Right ventricle myocardium inferior (tissue), 1 donor: ENCODE measurements at regions of chr7 and their contacts with region 1.

Region 1: DNA sequence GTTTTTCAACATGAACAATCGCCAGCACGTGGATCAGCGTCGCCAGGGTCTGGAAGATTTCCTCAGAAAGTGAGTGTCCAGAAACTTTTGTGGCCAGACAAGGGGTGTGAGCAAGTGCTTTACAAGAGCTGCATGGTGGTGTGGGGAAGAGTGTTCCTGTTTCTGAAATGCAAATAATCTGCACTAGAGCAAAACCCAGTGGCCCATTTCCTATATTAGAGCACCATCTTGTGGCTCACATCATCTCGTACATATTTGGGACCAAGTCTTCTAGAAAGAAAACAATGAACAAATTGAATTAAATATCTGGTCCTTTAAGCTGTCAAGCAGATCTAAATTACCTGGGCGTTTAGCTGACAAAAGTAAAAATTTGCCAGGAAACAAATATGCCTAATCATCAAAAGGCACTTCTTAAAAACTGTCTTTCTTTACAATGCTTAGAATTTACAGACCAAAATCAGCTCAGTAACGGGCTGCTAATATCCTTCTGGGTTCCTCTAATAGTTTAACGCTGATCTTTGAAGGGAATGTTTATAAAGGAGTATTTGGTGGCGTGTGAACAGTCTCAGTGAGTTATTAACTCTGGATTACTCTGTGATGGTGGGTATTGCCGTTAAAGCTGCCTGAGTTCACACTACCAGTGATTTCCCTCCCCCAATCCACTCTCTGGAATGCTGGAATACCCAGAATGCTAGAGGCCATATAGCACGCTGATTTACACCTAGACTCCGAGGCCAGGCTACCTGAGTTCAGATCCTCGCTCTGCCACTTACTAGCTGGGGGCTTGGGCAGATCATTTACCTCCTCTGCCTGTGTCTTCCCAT is 73.6 kb downstream of the SNX10 start:
- DNase-seq: no peak
- ATAC-seq: peak; percentile 78

Region 2: DNA sequence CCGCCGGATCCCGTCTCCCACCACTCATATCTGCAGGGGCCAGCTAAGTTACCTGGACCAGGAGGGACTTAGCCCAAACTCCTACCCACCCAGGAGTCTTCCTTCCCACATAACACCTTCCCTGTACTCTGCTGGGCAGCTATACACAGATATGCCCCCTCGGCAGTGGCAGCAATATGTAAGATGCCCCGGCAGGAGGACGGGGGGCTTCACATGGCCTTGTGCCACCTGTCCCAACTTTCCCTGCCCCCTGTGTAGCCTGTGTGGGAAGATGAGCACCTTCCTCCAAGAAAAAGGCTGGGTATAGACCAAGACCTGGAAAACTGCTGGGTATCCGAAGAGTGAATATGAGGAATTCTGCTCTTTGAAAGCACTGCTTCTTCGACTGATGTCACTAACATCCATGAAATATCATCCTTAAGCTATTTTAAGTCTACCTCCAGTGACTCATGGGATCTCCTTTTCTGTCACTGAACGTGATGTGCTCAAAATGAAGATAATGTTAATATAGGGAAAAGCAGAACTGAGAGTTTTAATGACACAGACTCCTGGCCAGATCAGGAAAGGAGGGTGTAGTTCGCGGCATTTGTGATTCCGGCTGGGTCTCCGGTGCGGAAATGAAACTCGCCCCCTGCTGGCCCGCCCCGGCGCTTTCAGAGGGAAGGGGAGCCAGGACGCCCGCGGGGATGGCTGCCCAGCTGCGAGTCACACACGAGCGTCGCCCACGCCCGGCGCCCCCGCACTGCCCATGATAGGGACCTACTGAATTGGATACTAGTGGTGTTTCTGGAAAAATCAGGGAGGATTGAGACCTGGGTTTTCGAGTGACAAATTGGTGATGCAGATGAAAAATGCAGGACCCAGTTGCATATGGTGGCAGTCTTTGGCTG is 470.1 kb before region 1 on chr7:
- intact Hi-C with region 1: loop called (anchors 1 kb)
- DNase-seq: peak; percentile 76
- ATAC-seq: peak; percentile 59

Region 3: GRCh38 chr7:26090927-26091519 is 274.3 kb before region 1 on chr7:
- intact Hi-C with region 1: loop called (anchors 2 kb)
- DNase-seq: no peak
- ATAC-seq: no peak

Region 4: GRCh38 chr7:26311798-26312197 is 53.5 kb before region 1 on chr7:
- intact Hi-C with region 1: no loop called
- DNase-seq: no peak
- ATAC-seq: no peak

Region 5: GRCh38 chr7:26376175-26376917 is 11.1 kb after region 1 on chr7:
- intact Hi-C with region 1: no loop called
- DNase-seq: peak; percentile 66
- ATAC-seq: peak; percentile 23

Region 6: GRCh38 chr7:26667500-26668133 is 302.3 kb after region 1 on chr7:
- intact Hi-C with region 1: loop called (anchors 1 kb)
- DNase-seq: no peak
- ATAC-seq: peak; percentile 28

Region 7: DNA sequence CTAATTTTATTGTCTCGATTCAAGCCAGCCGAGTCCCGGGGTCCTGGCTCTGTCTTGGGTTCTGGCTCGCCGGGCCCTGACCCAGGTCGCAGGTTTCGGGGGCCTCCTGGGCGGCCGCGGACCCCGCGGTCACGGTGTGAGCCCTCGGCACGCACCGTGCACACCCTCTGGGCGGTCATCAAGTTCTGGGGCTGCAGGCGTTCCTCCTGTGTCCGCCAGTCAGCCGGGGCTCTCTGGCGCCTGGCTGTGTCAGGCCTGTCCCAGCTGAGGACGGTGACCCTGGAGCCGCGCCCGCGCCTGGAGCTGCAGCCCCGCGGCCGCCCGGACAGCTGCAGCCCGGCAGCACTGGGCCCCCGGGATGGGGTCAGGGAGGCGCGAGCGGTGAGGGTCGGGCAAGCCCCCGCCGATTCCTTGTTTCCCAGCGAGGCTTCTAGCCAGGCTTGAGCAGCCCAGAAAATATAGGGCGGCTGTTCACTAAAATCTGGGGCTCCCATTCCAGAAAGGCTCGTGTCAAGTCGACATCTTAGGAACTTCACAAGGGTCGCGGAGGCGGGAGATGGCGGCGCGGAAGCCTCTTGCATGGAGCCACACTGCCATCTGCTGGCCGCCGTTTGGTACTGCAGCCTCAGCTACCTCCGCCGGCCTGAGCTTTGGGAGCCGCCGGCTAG is 795.4 kb after region 1 on chr7:
- intact Hi-C with region 1: loop called (anchors 5 kb)
- DNase-seq: peak; percentile 94
- ATAC-seq: peak; percentile 81